ENCODE measurements at regions of chr6 and their contacts with region 1.

Region 1: GRCh38 chr6:117449549-117450439 is 24.1 kb upstream of the ROS1 start:
- DNase-seq: peak; percentile 30 to 66 (median 57)
- H3K4me3 ChIP-seq: no peak overlapping the region
- H3K4me3 Mint-ChIP-seq: no peak overlapping the region
- H3K27ac ChIP-seq: no peak overlapping the region
- H3K27ac Mint-ChIP-seq: no peak overlapping the region
- H3K4me1 ChIP-seq: no peaks in the 10 kb centered on the region
- H3K4me1 Mint-ChIP-seq: no peaks in the 10 kb centered on the region
- H3K27me3 ChIP-seq: peaks cover 3% of the 10 kb centered on the region
- H3K27me3 Mint-ChIP-seq: peaks cover 22 to 49% of the 10 kb centered on the region in 2 donors

Region 2: GRCh38 chr6:117306227-117306785 is 143.5 kb before region 1 on chr6:
- CTCF ChIA-PET with region 1: no interaction called
- POLR2A ChIA-PET with region 1: no interaction called
- DNase-seq: no peak
- H3K4me3 ChIP-seq: no peak overlapping the region
- H3K4me3 Mint-ChIP-seq: no peak overlapping the region
- H3K27ac ChIP-seq: no peak overlapping the region
- H3K27ac Mint-ChIP-seq: no peak overlapping the region
- H3K4me1 ChIP-seq: no peaks in the 10 kb centered on the region
- H3K4me1 Mint-ChIP-seq: no peaks in the 10 kb centered on the region
- H3K27me3 ChIP-seq: no peaks in the 10 kb centered on the region
- H3K27me3 Mint-ChIP-seq: peaks cover 8 to 12% of the 10 kb centered on the region in 2 donors

Region 3: GRCh38 chr6:117373211-117373813 is 76.5 kb before region 1 on chr6:
- CTCF ChIA-PET with region 1: no interaction called
- POLR2A ChIA-PET with region 1: no interaction called
- DNase-seq: no peak
- H3K4me3 ChIP-seq: no peak overlapping the region
- H3K4me3 Mint-ChIP-seq: no peak overlapping the region
- H3K27ac ChIP-seq: no peak overlapping the region
- H3K27ac Mint-ChIP-seq: no peak overlapping the region
- H3K4me1 ChIP-seq: no peaks in the 10 kb centered on the region
- H3K4me1 Mint-ChIP-seq: peaks cover 3 to 12% (median 7%) of the 10 kb centered on the region in 3 donors
- H3K27me3 ChIP-seq: no peaks in the 10 kb centered on the region
- H3K27me3 Mint-ChIP-seq: peaks cover 1 to 24% of the 10 kb centered on the region in 2 donors

Region 4: GRCh38 chr6:117549611-117550010 is 99.8 kb after region 1 on chr6:
- CTCF ChIA-PET with region 1: interaction called, 16 read pairs
- POLR2A ChIA-PET with region 1: interaction called, 3 read pairs
- DNase-seq: peak in 4 of 5 donors; percentile 3 to 57 (median 38)
- H3K4me3 ChIP-seq: peak overlapping the region; percentile 65
- H3K4me3 Mint-ChIP-seq: peak overlapping the region; percentile 80 to 93 (median 86)
- H3K27ac ChIP-seq: no peak overlapping the region
- H3K27ac Mint-ChIP-seq: peak overlapping the region; percentile 81 to 95 (median 92)
- H3K4me1 ChIP-seq: peaks cover 34% of the 10 kb centered on the region
- H3K4me1 Mint-ChIP-seq: peaks cover 39 to 46% (median 44%) of the 10 kb centered on the region in 3 donors
- H3K27me3 ChIP-seq: no peaks in the 10 kb centered on the region
- H3K27me3 Mint-ChIP-seq: no peaks in the 10 kb centered on the region

Region 5: DNA sequence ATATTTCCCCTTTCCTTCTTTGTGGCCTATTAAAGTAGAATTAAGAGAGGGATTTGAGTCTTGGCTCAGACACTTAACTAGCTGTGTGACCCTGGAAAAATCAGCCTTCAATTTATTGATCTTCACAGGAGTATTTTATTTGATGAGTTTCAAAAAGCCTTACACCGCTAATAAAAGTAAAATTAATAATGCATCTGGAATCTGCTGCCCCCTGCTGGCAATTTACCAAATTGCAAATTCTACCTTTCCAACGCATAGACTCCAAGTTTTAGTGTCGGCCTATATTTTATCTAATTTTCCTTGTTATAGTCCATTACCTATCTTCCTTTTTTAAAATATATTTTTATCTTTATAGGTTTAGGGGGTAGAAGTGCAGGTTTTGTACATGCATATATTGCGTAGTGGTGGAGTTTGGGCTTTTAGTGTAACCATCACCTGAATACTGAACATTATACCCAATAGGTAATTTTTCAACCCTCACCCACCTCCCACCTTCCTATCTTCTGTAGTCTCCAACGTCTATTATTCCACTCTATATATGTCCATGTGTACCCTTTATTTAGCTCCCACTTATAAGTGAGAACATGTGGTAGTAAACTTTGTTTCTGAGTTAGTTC is 106.2 kb after region 1 on chr6:
- CTCF ChIA-PET with region 1: interaction called, 36 read pairs
- POLR2A ChIA-PET with region 1: interaction called, 3 read pairs
- DNase-seq: peak; percentile 44 to 62 (median 47)
- H3K4me3 ChIP-seq: no peak overlapping the region
- H3K4me3 Mint-ChIP-seq: no peak overlapping the region
- H3K27ac ChIP-seq: no peak overlapping the region
- H3K27ac Mint-ChIP-seq: no peak overlapping the region
- H3K4me1 ChIP-seq: peaks cover under 1% of the 10 kb centered on the region
- H3K4me1 Mint-ChIP-seq: peaks cover 5 to 10% (median 6%) of the 10 kb centered on the region in 3 donors
- H3K27me3 ChIP-seq: no peaks in the 10 kb centered on the region
- H3K27me3 Mint-ChIP-seq: no peaks in the 10 kb centered on the region

Region 6: GRCh38 chr6:117602151-117602898 is 152.5 kb after region 1 on chr6 and contains the start of gene GOPC:
- CTCF ChIA-PET with region 1: interaction called, 48 read pairs
- POLR2A ChIA-PET with region 1: interaction called, 6 read pairs
- DNase-seq: peak; percentile 91 to 98 (median 96)
- H3K4me3 ChIP-seq: peak within 1 kb of the TSS; percentile 92
- H3K4me3 Mint-ChIP-seq: peak within 1 kb of the TSS; percentile 96 to 100 (median 99)
- H3K27ac ChIP-seq: peak within 1 kb of the TSS; percentile 79
- H3K27ac Mint-ChIP-seq: peak within 1 kb of the TSS; percentile 89 to 99 (median 98)
- H3K4me1 ChIP-seq: peaks cover 30% of the 10 kb centered on the region
- H3K4me1 Mint-ChIP-seq: peaks cover 45 to 54% (median 53%) of the 10 kb centered on the region in 3 donors
- H3K27me3 ChIP-seq: no peaks in the 10 kb centered on the region
- H3K27me3 Mint-ChIP-seq: peaks cover 0 to 9% of the 10 kb centered on the region in 2 donors
- total RNA-seq, gene GOPC: 21.2 to 22.0 TPM